Prostate gland (tissue), 2 donors: ENCODE measurements at regions of chr7 and their contacts with region 1.

Region 1: GRCh38 chr7:95199779-95200558 is 124.4 kb downstream of the PON1 start:
- DNase-seq: peak; percentile 5
- H3K4me3 ChIP-seq: no peak overlapping the region
- H3K27ac ChIP-seq: no peak overlapping the region
- H3K4me1 ChIP-seq: no peaks in the 10 kb centered on the region
- H3K27me3 ChIP-seq: no peaks in the 10 kb centered on the region
- CTCF ChIP-seq: peak in 3 of 4 experiments; percentile 17 to 52 (median 47)
- POLR2A ChIP-seq: no peak

Region 2: DNA sequence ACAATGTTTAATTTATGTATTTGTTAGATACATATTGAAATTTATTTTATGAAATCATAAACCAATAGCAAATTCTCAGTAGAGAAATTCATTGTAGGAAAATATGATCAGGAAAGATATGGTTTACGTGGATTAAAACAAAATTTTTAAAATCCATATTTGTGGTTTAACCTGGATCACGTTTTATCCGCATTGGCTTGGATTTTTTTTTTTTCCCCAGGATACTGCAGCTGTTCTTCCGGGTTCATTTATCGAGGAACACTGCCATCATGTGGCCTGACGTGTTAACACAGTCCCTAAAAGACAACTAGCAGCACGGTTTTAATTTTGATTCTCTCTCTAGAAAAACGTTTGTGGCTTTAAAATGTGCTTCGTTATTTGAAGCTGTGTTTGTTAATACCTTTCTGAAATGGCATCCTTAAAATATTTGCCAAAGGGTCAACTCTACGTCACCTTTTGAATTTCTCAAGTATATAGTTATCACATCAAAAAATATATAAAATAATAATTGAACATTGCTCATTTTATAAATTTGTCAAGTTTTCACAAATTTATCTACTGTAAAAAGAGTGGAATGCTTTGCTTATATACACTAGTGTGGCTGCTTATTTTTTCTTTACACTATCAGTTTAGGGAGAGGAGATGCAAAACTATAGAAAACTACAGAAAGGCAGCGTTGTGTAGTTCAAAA is 277.1 kb after region 1 on chr7:
- intact Hi-C with region 1: loop called (anchors 10 kb)
- DNase-seq: peak; percentile 64
- H3K4me3 ChIP-seq: no peak overlapping the region
- H3K27ac ChIP-seq: no peak overlapping the region
- H3K4me1 ChIP-seq: no peaks in the 10 kb centered on the region
- H3K27me3 ChIP-seq: no peaks in the 10 kb centered on the region
- CTCF ChIP-seq: peak; percentile 24 to 75 (median 72)
- POLR2A ChIP-seq: no peak

Region 3: DNA sequence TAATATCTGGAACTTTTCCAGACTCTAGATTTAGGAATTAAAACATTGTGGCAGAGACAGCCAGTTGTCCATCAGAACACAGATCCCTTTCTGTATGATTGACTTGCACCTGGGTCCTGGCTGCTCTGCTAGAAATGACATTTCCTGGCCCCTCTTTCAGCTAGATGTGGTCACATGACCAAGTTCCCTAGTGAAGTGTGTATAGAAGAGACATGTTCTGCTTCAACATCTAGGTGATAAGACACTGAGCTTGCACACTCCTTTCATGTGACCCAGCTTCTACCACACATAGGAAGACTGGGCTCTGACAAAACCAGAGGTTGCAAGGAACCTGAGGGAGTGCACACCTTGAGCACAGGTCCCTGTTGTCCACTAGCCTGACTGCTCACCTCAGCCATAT is 549.5 kb after region 1 on chr7:
- intact Hi-C with region 1: no loop called
- DNase-seq: no peak
- H3K4me3 ChIP-seq: no peak overlapping the region
- H3K27ac ChIP-seq: no peak overlapping the region
- H3K4me1 ChIP-seq: no peaks in the 10 kb centered on the region
- H3K27me3 ChIP-seq: no peaks in the 10 kb centered on the region
- CTCF ChIP-seq: no peak
- POLR2A ChIP-seq: no peak